Panc1 (cell line): ENCODE measurements at regions of chr13 and their contacts with region 1.

Region 1: DNA sequence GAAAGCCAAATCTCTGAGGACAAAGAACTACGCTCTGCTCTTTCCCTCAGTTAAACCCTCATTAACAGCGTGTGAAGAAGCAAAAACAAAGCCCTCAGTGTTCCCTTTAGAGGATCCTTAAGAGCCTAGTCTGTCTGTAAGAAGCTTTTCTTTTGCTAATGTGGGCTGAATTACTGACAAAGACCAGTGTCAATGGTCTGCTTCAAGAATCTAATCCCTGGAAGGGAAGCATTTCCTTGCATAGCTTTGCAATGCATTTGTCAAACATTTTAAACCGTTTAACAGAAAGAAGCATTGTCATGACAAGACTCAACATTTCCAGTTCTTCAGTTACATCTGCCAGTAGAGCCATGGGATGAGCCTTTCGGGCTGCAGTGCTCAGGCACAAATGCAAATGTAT is 64.9 kb downstream of the EDNRB start:
- DNase-seq: no peak
- ATAC-seq: no peak
- H3K4me3 ChIP-seq: no peak overlapping the region
- H3K27ac ChIP-seq: no peak overlapping the region
- H3K4me1 ChIP-seq: no peaks in the 10 kb centered on the region
- H3K27me3 ChIP-seq: no peaks in the 10 kb centered on the region
- CTCF ChIP-seq: no peak

Region 2: DNA sequence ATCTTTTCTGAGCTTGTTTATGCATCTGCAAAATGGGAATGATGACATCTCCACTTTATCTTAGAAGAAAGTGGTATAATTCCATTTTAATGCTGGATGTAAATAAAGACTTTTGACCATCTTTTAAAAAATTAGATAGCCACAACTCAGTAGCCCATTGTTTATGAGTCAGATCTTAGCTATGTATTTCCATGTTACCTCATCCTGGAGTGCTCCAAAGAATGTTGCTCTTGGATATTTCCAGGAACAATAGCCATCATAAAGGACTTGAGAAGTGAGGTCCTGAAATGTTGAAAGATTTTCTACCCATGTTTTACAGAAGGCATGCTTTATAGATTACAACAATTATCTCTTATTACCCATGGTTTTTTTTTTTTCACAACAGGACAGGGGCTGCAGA is 294.2 kb after region 1 on chr13:
- CTCF ChIA-PET with region 1: interaction called, 14 read pairs
- POLR2A ChIA-PET with region 1: no interaction called
- in situ Hi-C with region 1: no loop called
- intact Hi-C with region 1: no loop called
- DNase-seq: no peak
- ATAC-seq: no peak
- H3K4me3 ChIP-seq: no peak overlapping the region
- H3K27ac ChIP-seq: no peak overlapping the region
- H3K4me1 ChIP-seq: no peaks in the 10 kb centered on the region
- H3K27me3 ChIP-seq: no peaks in the 10 kb centered on the region
- CTCF ChIP-seq: no peak